ENCODE measurements at regions of chr5 and their contacts with region 1.

Region 1: GRCh38 chr5:134304311-134304710 is 62.7 kb downstream of the CDKL3 start:
- DNase-seq: no peak
- ATAC-seq: no peak
- H3K4me3 ChIP-seq: no peak overlapping the region
- H3K27ac ChIP-seq: no peak overlapping the region
- H3K4me1 ChIP-seq: no peaks in the 10 kb centered on the region
- H3K27me3 ChIP-seq: no peaks in the 10 kb centered on the region
- CTCF ChIP-seq: no peak
- POLR2A ChIP-seq: no peak

Region 2: GRCh38 chr5:134503088-134503946 is 199.0 kb after region 1 on chr5:
- intact Hi-C with region 1: loop called in 1 of 10 experiments (anchors 10 kb)
- DNase-seq: peak; percentile 62 to 89 (median 69)
- ATAC-seq: peak; percentile 16 to 81 (median 78)
- H3K4me3 ChIP-seq: no peak overlapping the region
- H3K27ac ChIP-seq: peak overlapping the region; percentile 8 to 86 (median 76)
- H3K4me1 ChIP-seq: peaks cover 5 to 42% (median 27%) of the 10 kb centered on the region in 12 donors
- H3K27me3 ChIP-seq: no peaks in the 10 kb centered on the region
- CTCF ChIP-seq: no peak
- POLR2A ChIP-seq: peak in 1 of 2 donors; percentile 57

Region 3: GRCh38 chr5:134577796-134578363 is 273.6 kb after region 1 on chr5:
- intact Hi-C with region 1: loop called in 2 of 10 experiments (anchors 5 kb)
- DNase-seq: peak; percentile 71 to 89 (median 77)
- ATAC-seq: peak in 3 of 4 donors; percentile 30 to 53 (median 51)
- H3K4me3 ChIP-seq: no peak overlapping the region
- H3K27ac ChIP-seq: peak overlapping the region in 2 of 12 donors; percentile 20 to 30
- H3K4me1 ChIP-seq: peaks cover 0 to 55% (median 33%) of the 10 kb centered on the region in 12 donors
- H3K27me3 ChIP-seq: no peaks in the 10 kb centered on the region
- CTCF ChIP-seq: peak; percentile 73 to 89 (median 84)
- POLR2A ChIP-seq: no peak

Region 4: GRCh38 chr5:134586866-134587524 is 282.7 kb after region 1 on chr5:
- intact Hi-C with region 1: loop called (anchors 1 to 5 kb)
- DNase-seq: peak; percentile 74 to 93 (median 81)
- ATAC-seq: peak; percentile 77 to 90 (median 86)
- H3K4me3 ChIP-seq: peak overlapping the region in 5 of 12 donors; percentile 10 to 37 (median 17)
- H3K27ac ChIP-seq: no peak overlapping the region
- H3K4me1 ChIP-seq: peaks cover 0 to 26% (median 11%) of the 10 kb centered on the region in 12 donors
- H3K27me3 ChIP-seq: no peaks in the 10 kb centered on the region
- CTCF ChIP-seq: peak; percentile 72 to 89 (median 82)
- POLR2A ChIP-seq: no peak

Region 5: DNA sequence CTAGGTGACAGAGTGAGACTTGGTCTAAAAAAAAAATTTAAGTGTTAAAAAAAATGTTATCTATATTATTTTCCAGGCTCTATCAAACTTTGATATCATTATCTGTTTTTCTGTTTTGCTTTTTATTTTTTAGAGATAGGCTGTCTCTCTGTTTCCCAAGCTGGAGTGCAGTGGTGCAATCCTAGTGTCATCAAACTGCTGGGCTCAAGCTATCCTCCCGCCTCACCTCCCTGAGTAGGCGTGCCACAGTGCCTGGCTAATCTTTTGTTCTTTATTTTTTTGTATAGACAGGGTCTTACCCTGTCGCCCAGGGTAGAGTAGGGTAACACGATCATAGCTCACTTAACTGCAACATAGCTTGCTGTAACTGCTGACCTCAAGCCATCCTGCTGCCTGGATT is 358.7 kb after region 1 on chr5:
- intact Hi-C with region 1: loop called in 1 of 10 experiments (anchors 10 kb)
- DNase-seq: no peak
- ATAC-seq: no peak
- H3K4me3 ChIP-seq: no peak overlapping the region
- H3K27ac ChIP-seq: no peak overlapping the region
- H3K4me1 ChIP-seq: peaks cover 0 to 5% (median 0%) of the 10 kb centered on the region in 12 donors
- H3K27me3 ChIP-seq: no peaks in the 10 kb centered on the region
- CTCF ChIP-seq: no peak
- POLR2A ChIP-seq: no peak

Region 6: GRCh38 chr5:134708301-134708700 is 404.0 kb after region 1 on chr5:
- intact Hi-C with region 1: no loop called
- DNase-seq: no peak
- ATAC-seq: no peak
- H3K4me3 ChIP-seq: no peak overlapping the region
- H3K27ac ChIP-seq: no peak overlapping the region
- H3K4me1 ChIP-seq: no peaks in the 10 kb centered on the region
- H3K27me3 ChIP-seq: no peaks in the 10 kb centered on the region
- CTCF ChIP-seq: no peak
- POLR2A ChIP-seq: no peak